ENCODE measurements at regions of chr1 and their contacts with region 1.

Region 1: DNA sequence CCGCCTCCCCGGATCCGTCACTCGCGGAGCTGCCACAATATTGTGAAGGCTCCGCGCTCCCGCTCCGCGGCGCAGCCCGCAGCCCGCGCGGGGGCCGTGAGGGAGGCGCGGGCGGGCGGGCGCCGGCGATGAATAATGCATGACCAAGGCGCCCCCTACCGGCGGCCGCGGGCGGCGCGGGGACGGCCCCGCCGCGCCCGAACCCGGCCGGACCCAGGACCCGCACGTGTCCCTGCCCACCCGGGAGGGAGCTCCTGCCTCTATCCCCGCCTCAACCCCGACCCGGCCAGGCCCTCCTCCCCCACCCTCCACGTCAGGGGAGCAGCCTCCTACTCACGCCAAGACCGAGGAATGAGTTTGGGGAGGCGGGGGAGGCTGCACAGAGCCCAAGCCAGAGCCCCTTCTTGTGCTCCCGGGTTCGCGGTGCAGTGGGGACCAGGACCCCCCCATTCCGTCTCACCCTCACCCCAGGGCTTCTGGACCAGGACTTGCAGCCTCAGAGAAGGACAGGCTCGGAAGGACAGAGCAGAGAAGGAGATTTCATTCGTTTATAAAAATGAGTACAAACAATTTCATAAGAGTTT is 70.8 kb upstream of the CASZ1 start:
- DNase-seq: peak in 2 of 3 donors; percentile 55 to 56
- ATAC-seq: peak; percentile 66 to 90 (median 85)
- H3K4me3 ChIP-seq: peak overlapping the region in 2 of 3 donors; percentile 16 to 36
- H3K27ac ChIP-seq: no peak overlapping the region
- H3K4me1 ChIP-seq: peaks cover 0 to 4% (median 0%) of the 10 kb centered on the region in 4 donors
- H3K27me3 ChIP-seq: no peaks in the 10 kb centered on the region
- CTCF ChIP-seq: peak; percentile 63 to 92 (median 76)
- POLR2A ChIP-seq: no peak

Region 2: DNA sequence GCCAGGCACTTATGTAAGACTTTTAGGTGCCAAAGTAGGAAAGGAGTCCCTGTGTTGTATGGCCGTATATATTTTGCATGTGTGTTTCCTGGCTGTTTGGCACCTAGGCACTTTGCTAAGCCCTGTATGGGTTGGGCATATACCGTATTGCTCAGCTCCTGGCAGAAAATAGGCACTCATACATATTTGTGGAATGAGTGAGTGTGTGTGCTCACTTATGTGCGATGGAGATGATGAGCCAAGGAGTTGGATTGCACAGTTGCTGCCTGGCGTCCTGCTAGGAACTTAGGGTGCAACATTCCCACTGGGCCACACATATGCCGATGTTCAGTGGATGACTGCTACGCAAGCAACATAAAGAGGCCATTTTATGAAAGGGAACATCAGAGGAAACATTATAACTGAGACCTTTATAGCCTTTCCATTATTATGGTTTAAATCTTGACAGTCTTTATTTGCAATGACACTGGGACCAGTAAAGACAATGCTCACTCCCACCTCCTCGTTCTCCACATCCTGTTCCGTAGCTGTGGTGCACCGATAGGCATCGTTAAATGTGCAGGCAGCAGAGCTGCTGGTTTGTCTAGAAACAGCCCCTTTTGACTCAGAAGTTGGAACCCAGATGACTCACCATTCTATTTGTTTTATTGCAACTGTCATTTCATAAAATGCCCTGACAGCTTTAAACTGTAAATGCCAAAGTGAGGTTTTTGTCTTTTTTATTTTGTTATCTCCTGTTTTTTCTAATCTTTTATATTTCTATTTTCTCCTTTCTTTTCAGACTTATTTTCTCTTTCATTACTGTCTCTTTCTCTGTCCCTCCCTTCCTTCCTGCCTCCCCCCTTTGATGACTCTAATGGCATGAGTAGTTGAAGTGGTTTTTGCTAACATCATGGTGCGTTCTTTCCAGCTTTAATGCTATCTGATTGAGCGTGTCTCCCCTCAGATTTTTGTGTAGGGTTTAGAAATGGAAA is 356.4 kb before region 1 on chr1:
- intact Hi-C with region 1: loop called in 1 of 2 experiments (anchors 5 kb)
- DNase-seq: peak in 1 of 3 donors; percentile 42
- ATAC-seq: peak in 3 of 4 donors; percentile 5 to 49 (median 15)
- H3K4me3 ChIP-seq: no peak overlapping the region
- H3K27ac ChIP-seq: peak overlapping the region; percentile 2 to 61 (median 39)
- H3K4me1 ChIP-seq: peaks cover 0 to 70% (median 24%) of the 10 kb centered on the region in 4 donors
- H3K27me3 ChIP-seq: no peaks in the 10 kb centered on the region
- CTCF ChIP-seq: no peak
- POLR2A ChIP-seq: no peak

Region 3: GRCh38 chr1:10796019-10796944 is 70.9 kb before region 1 on chr1 and contains the start of gene CASZ1:
- intact Hi-C with region 1: loop called in 1 of 2 experiments (anchors 10 kb)
- DNase-seq: peak; percentile 79 to 86 (median 83)
- ATAC-seq: peak; percentile 87 to 94 (median 94)
- H3K4me3 ChIP-seq: peak within 1 kb of the TSS; percentile 40 to 61 (median 45)
- H3K27ac ChIP-seq: no peak within 1 kb of the TSS
- H3K4me1 ChIP-seq: peaks cover 0 to 18% (median 6%) of the 10 kb centered on the region in 4 donors
- H3K27me3 ChIP-seq: no peaks in the 10 kb centered on the region
- CTCF ChIP-seq: no peak
- POLR2A ChIP-seq: peak; percentile 35
- total RNA-seq, gene CASZ1: 3.1 to 10.1 (median 5.3) TPM

Region 4: DNA sequence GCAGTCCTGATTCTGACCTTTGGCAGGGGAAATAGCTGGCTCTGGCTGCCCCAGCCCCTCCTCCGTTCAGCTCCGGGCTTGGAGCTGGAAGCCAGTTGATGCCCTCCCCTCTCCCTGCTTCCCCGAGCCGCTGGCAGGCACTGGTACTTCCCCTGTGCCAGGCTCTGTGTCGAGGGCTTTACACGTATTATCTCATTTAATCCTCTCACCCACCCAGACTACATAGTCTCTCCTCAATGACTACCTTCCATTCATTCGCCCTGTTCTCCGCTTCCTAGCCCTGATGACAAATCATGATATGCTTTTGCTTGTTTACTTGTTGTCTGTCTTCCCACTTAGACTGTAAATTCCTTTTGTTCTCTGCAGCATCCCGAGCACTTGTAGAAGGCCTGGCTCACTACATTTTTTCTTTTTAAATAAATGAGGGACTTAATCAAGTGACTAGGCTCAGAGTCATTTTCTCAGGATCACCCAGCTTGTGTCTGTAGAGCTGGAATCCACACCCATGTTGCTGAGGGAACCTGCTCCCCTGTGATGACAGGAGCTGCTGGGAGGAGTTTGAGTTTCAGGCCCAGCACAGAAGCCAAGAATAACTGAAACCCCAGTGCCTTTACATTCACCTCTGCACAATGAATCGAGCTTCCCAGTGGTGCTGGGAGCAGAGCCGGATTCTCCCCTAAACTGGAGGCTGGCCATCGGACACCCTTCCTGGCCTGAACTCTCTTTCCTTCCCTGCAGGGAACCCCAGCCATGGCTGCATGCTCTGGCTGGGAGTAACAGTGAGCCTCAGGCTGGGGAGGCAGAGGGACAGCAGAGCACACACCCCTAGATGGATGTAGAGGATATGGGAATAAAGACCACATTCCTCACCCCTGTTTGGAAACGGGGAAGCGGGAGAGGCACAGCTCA is 464.1 kb after region 1 on chr1:
- intact Hi-C with region 1: no loop called
- DNase-seq: no peak
- ATAC-seq: peak in 1 of 4 donors; percentile 14
- H3K4me3 ChIP-seq: no peak overlapping the region
- H3K27ac ChIP-seq: no peak overlapping the region
- H3K4me1 ChIP-seq: no peaks in the 10 kb centered on the region
- H3K27me3 ChIP-seq: no peaks in the 10 kb centered on the region
- CTCF ChIP-seq: no peak
- POLR2A ChIP-seq: no peak

Measured in right lobe of liver (tissue), 6 donors.